Activated CD4-positive, alpha-beta T cell treated with anti-CD3 and anti-CD28 coated beads, Interleukin-2, amount 10 ng/mL, durations not matched to agents 24 days and 14 days (primary cell): ENCODE measurements at regions of chr2 and their contacts with region 1.

Region 1: DNA sequence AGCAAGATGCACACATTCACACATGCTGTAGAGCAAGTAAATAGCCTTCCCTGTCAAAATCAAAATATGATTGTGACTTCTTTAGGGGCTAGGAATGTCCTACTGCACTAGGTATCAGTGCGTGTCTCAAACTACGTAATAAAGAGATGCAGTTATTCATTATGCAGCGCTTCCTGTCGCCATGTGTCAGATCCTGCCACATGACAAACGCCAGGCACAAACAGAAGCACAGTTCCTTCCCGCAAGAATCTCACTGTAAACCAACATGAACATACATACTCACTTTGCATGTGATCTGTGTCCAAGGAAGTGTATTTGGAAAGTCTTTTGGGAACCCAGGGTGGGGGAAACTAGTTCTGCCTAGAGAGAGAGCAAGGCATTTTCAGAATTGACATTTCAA is 599.9 kb downstream of the RNF144A start:
- DNase-seq: peak; percentile 74
- H3K4me3 Mint-ChIP-seq: peak overlapping the region; percentile 48
- H3K27ac Mint-ChIP-seq: peak overlapping the region; percentile 89
- H3K4me1 Mint-ChIP-seq: peaks cover 38% of the 10 kb centered on the region
- H3K27me3 Mint-ChIP-seq: no peaks in the 10 kb centered on the region

Region 2: GRCh38 chr2:7467782-7468447 is 49.2 kb before region 1 on chr2:
- intact Hi-C with region 1: loop called (anchors 2 kb)
- DNase-seq: peak; percentile 85
- H3K4me3 Mint-ChIP-seq: peak overlapping the region; percentile 51
- H3K27ac Mint-ChIP-seq: peak overlapping the region; percentile 97
- H3K4me1 Mint-ChIP-seq: peaks cover 36% of the 10 kb centered on the region
- H3K27me3 Mint-ChIP-seq: no peaks in the 10 kb centered on the region

Region 3: DNA sequence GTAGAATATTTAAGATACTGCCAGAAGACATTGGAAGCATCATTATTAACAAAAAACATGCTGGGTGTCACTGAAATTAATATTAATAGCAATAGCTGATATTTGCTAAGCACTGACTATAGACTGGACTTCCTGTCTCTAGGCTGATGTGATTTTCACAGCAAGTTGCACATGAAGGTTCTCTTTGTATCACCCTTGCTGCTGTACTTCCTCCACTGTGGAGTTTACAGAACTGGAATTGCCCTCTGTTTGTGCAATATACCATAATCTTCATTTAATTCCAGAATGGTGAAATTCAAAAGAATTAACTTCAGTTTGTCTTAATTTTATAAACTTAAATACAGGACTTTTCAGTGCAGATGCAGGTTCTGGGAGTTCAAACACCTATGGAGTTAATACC is 14.8 kb before region 1 on chr2:
- intact Hi-C with region 1: no loop called
- DNase-seq: no peak
- H3K4me3 Mint-ChIP-seq: no peak overlapping the region
- H3K27ac Mint-ChIP-seq: no peak overlapping the region
- H3K4me1 Mint-ChIP-seq: peaks cover 24% of the 10 kb centered on the region
- H3K27me3 Mint-ChIP-seq: no peaks in the 10 kb centered on the region

Region 4: GRCh38 chr2:7593360-7593759 is 76.3 kb after region 1 on chr2:
- intact Hi-C with region 1: loop called (anchors 2 kb)
- DNase-seq: no peak
- H3K4me3 Mint-ChIP-seq: no peak overlapping the region
- H3K27ac Mint-ChIP-seq: no peak overlapping the region
- H3K4me1 Mint-ChIP-seq: peaks cover 18% of the 10 kb centered on the region
- H3K27me3 Mint-ChIP-seq: no peaks in the 10 kb centered on the region

Region 5: GRCh38 chr2:7639476-7639875 is 122.4 kb after region 1 on chr2:
- intact Hi-C with region 1: no loop called
- DNase-seq: no peak
- H3K4me3 Mint-ChIP-seq: no peak overlapping the region
- H3K27ac Mint-ChIP-seq: no peak overlapping the region
- H3K4me1 Mint-ChIP-seq: no peaks in the 10 kb centered on the region
- H3K27me3 Mint-ChIP-seq: no peaks in the 10 kb centered on the region